ENCODE measurements at regions of chr7 and their contacts with region 1.

Region 1: DNA sequence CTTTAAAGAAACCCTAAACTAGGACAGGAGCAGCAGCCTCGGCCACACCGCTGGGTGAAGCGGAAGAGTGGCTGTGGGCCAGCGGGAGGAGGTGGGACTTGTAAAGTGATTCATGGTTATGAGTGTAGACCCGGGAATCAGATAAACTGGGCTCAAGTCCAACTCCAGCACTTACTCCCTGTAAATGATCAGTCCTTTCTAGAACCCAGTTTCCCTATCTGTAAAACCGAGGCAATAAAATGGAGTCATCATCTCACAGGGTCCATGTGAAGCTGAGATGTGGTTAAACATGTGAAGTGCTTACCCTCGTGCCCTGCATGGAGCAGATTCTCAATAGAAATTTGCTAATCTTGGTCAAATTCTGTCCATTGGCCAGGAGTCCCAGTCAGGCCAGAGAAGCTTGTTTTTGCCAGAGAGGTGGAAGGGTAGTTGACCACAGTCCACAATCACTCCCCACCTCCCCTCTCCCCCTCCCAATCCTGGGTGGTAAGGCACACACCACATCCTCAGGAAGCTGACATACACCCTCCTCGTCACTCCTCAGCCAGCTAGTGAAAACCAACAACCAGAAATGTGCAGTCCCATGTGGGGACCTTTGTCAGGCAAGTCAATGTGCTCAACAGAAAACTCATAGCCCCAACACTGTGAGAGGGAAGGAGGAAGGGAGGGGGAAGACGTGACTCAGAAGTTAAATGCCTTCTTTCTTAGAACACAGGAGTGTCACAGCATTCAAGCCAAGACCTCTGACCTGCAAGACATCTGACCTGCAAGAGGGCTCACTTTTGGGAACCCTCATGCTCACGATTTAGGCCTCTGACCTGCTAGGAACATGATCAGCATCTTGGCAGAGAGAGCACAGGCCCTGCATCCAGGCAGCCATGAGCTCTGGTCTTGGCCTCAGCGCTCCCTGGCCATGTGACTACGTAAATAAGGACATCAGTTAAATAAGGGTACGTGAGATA is 145.1 kb downstream of the PLXNA4 start:
- DNase-seq: peak; percentile 58
- ATAC-seq: peak; percentile 96
- H3K4me3 Mint-ChIP-seq: no peak overlapping the region
- H3K27ac Mint-ChIP-seq: peak overlapping the region; percentile 69
- H3K4me1 Mint-ChIP-seq: peaks cover 61% of the 10 kb centered on the region
- H3K27me3 Mint-ChIP-seq: no peaks in the 10 kb centered on the region

Region 2: DNA sequence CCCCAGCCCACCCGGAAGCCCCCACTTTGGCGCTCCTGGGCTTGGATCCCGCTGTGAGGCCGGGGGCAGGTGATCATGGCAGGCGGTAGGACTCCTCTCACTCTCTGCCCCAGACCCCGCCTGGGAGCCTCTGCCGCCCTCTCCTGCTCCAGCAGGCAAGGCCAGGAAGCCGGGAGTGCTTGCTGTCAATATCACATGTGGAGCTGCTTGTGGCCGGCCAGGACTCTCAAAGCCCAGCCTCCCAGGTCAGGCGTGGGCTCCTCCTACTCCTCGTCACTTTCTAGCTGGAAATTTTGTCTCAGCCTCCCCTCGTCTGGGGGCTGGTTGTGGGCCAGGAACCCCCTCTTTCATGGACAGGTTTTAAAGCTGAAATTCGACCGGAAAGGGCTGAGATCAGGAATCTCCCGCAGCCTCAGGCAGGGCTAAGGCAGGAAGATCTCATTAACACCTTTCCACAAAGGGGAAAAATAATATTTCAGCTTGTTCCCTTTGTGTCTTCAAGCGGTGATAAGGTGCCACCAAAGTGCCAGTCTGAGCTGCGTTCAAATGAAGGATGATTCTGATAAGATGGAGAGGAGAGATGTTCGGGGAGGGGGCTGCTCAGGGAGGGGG is 601.1 kb before region 1 on chr7:
- CTCF ChIA-PET with region 1: no interaction called
- POLR2A ChIA-PET with region 1: no interaction called
- intact Hi-C with region 1: no loop called
- DNase-seq: no peak
- ATAC-seq: no peak
- H3K4me3 Mint-ChIP-seq: no peak overlapping the region
- H3K27ac Mint-ChIP-seq: no peak overlapping the region
- H3K4me1 Mint-ChIP-seq: no peaks in the 10 kb centered on the region
- H3K27me3 Mint-ChIP-seq: peaks cover 25% of the 10 kb centered on the region

Region 3: DNA sequence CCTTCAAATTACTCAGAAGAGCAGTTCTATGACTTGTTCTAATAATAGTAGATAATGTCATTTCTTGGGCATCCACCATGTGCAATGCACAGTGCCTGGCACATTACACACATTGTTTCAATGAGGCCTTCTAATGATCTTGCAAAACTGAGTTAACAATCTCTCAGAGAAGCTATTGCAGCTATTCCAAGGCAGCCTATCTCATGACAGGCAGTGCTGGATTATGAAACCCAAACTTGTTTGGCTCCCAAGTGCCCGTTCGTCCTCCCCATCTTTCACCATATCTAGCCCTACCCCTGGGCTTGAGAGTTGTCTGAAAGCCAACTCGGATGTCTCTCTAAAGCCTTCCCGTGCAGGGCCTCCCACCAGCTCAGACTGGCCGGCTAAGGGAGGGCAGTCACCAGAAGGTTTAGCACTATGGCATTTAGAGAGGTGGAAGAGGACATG is 260.0 kb before region 1 on chr7:
- CTCF ChIA-PET with region 1: no interaction called
- POLR2A ChIA-PET with region 1: no interaction called
- intact Hi-C with region 1: no loop called
- DNase-seq: no peak
- ATAC-seq: no peak
- H3K4me3 Mint-ChIP-seq: no peak overlapping the region
- H3K27ac Mint-ChIP-seq: no peak overlapping the region
- H3K4me1 Mint-ChIP-seq: no peaks in the 10 kb centered on the region
- H3K27me3 Mint-ChIP-seq: peaks cover 4% of the 10 kb centered on the region

Region 4: DNA sequence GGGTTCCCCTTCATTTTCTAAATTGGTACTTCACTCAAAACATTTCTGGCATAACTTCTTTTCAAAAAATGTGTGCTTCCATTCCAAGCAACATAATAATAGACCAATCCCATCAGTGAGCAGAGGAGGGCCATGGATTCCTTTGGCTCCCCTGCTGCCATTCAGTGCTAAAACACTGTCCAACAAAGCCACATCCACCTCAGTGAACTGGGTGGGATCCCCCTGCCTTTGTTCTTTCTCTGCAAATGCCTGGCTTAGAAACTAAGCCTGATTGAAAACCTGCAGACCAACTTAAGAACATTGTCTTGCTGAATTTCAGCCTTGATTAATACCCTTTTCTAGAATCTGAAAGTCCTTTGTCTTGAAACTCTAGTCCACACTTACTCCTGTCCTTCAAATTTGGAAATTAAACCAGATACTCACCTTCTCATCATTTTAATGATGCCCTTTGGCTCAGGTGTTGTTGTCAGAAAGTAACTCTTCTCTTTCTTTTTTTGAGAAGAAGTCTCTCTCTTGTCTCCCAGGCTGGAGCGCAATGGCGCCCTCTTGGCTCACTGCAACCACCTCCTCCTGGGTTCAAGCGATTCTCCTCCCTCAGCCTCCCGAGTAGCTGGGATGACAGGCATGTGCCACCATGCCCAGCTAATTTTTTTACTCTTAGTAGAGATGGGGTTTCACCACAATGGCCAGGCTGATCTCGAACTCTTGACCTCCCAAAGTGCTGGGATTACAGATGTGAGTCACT is 12.8 kb after region 1 on chr7:
- CTCF ChIA-PET with region 1: no interaction called
- POLR2A ChIA-PET with region 1: no interaction called
- intact Hi-C with region 1: no loop called
- DNase-seq: no peak
- ATAC-seq: no peak
- H3K4me3 Mint-ChIP-seq: no peak overlapping the region
- H3K27ac Mint-ChIP-seq: no peak overlapping the region
- H3K4me1 Mint-ChIP-seq: peaks cover 15% of the 10 kb centered on the region
- H3K27me3 Mint-ChIP-seq: no peaks in the 10 kb centered on the region

Region 5: DNA sequence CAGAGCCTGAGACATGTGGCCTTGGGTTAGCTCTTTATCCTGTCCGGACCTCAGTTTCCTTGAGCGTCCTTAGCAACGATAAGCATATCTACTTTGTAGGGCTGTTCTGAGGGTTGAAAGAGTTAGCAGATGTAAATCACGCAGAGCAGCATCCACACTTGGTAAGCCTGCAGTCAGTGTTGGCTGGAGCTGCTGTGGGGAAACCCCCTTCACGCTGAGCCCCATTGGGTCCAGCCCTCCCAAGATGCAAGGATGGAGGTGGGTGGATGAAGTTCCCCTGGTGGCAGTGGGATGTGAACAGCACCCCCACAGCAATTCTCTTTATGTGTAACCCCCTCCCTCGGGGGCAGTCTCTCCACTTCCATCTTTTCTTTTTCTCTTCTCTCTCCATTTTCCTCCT is 35.2 kb after region 1 on chr7:
- CTCF ChIA-PET with region 1: no interaction called
- POLR2A ChIA-PET with region 1: no interaction called
- intact Hi-C with region 1: loop called in 1 of 2 experiments (anchors 1 kb)
- DNase-seq: no peak
- ATAC-seq: no peak
- H3K4me3 Mint-ChIP-seq: no peak overlapping the region
- H3K27ac Mint-ChIP-seq: no peak overlapping the region
- H3K4me1 Mint-ChIP-seq: peaks cover 9% of the 10 kb centered on the region
- H3K27me3 Mint-ChIP-seq: no peaks in the 10 kb centered on the region

Region 6: GRCh38 chr7:132485600-132486273 is 54.6 kb after region 1 on chr7:
- CTCF ChIA-PET with region 1: interaction called, 3 read pairs
- POLR2A ChIA-PET with region 1: interaction called, 3 read pairs
- intact Hi-C with region 1: loop called in 1 of 2 experiments (anchors 1 kb)
- DNase-seq: peak; percentile 59
- ATAC-seq: peak; percentile 90
- H3K4me3 Mint-ChIP-seq: no peak overlapping the region
- H3K27ac Mint-ChIP-seq: peak overlapping the region; percentile 4
- H3K4me1 Mint-ChIP-seq: peaks cover 20% of the 10 kb centered on the region
- H3K27me3 Mint-ChIP-seq: no peaks in the 10 kb centered on the region